Testis (tissue), 5 donors: ENCODE measurements at regions of chr9 and their contacts with region 1.

Region 1: DNA sequence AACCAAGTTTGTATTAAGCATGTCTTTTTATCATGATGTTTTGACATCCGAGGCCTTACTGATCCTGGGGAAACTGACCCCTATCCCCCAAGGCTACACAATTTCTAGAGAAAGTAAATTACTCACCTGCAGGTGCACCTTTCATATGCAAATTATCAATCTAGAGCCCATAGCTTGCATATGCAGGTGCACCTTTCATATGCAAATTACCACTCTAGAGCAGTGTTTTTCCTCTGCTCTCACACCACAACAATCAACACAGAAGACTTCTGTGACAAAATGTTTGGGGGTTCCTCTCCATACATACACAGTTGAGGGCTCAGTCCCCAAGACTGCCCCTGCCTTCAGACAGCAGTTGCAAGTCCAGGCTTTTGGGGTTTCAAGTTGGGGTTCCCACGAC is 203.7 kb upstream of the RORB start:
- DNase-seq: no peak
- H3K4me3 ChIP-seq: no peak overlapping the region
- H3K27ac ChIP-seq: no peak overlapping the region
- H3K4me1 ChIP-seq: no peaks in the 10 kb centered on the region
- H3K27me3 ChIP-seq: no peaks in the 10 kb centered on the region
- CTCF ChIP-seq: no peak
- POLR2A ChIP-seq: no peak

Region 2: GRCh38 chr9:73962792-73963191 is 330.7 kb before region 1 on chr9:
- intact Hi-C with region 1: no loop called
- DNase-seq: no peak
- H3K4me3 ChIP-seq: no peak overlapping the region
- H3K27ac ChIP-seq: no peak overlapping the region
- H3K4me1 ChIP-seq: no peaks in the 10 kb centered on the region
- H3K27me3 ChIP-seq: no peaks in the 10 kb centered on the region
- CTCF ChIP-seq: no peak
- POLR2A ChIP-seq: no peak

Region 3: DNA sequence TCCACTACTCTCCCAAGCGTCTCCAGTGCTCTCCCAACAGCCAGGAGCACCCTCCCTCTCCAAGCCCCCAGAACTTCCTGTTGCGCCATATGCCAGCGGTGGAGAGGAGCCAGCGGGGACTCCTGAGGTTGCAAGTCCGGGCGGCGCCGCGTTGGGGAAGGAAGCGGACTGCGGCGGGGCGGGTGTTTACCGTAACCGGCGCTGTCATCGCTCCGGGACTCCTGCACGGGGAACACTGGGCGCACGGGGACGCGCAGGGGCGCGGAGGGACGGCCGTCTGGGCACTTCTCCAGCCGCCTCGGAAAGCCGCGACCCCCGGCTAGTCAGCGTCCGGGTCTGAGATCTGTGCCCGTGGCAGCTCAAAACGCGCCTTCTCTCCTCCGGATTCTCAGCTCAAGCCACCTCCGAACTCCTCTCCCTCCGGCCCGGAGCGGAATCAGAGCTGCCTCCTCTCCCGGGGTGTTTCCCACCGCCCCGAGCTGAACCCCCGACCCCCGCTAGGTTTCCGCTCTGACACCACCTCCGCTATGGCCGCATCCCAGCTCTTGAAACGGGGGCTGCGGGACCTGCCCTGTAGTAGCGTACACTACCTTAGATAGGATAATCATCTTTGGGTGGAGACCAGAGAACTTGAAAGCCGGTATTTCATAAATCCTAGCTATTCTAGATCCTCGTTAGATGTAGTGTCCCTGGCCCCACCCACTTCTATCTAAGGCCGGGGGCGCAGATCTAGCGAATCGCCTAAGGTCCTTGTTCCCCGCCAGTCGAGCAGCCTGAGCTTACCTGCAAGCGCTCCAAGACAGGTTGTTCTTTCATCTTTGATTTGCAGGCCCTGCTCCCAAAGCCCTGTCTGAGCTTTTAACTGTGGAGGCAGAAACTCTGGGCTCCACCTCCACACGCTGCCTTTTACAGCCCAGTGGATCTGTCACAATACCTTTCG is 593.8 kb after region 1 on chr9 and contains the start of gene TRPM6:
- intact Hi-C with region 1: loop called (anchors 5 kb)
- DNase-seq: peak; percentile 71
- H3K4me3 ChIP-seq: peak within 1 kb of the TSS; percentile 44 to 53
- H3K27ac ChIP-seq: peak within 1 kb of the TSS in 1 of 2 donors; percentile 47
- H3K4me1 ChIP-seq: no peaks in the 10 kb centered on the region
- H3K27me3 ChIP-seq: no peaks in the 10 kb centered on the region
- CTCF ChIP-seq: no peak
- POLR2A ChIP-seq: no peak
- total RNA-seq, gene TRPM6: 4.2 to 6.7 TPM